Activated B cell treated with CpG ODN at 0.5 μM for 24 hours (primary cell): ENCODE measurements at regions of chr6 and their contacts with region 1.

Region 1: DNA sequence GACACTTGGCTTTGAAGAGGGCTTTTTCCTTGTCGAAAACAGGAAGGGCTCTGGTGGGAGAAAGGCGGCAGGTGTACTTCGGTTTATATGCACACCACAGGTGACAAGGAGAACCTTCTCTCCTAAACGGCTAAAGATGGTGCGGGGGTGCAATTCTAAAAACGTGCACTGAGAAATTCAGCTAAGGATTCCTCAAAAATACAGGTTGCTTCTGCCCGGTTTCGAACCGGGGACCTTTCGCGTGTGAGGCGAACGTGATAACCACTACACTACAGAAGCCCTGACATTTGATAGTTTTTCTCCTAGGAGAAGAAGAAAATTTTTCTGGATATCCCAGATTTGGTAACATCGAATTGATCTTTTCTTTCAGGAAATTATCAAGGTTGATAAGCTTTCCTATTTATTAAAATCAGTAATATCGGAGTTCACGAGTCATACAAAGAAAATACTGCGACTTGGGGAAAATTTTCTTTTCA is 32.0 kb downstream of the POM121L2 start:
- DNase-seq: no peak
- ATAC-seq: no peak
- H3K4me3 Mint-ChIP-seq: no peak overlapping the region
- H3K27ac Mint-ChIP-seq: no peak overlapping the region
- H3K4me1 Mint-ChIP-seq: peaks cover 5% of the 10 kb centered on the region
- H3K27me3 Mint-ChIP-seq: peaks cover 56% of the 10 kb centered on the region
- CTCF ChIP-seq: no peak

Region 2: GRCh38 chr6:27178407-27178730 is 101.7 kb before region 1 on chr6:
- CTCF ChIA-PET with region 1: no interaction called
- POLR2A ChIA-PET with region 1: no interaction called
- intact Hi-C with region 1: no loop called
- DNase-seq: no peak
- ATAC-seq: no peak
- H3K4me3 Mint-ChIP-seq: peak overlapping the region; percentile 98
- H3K27ac Mint-ChIP-seq: peak overlapping the region; percentile 92
- H3K4me1 Mint-ChIP-seq: peaks cover 12% of the 10 kb centered on the region
- H3K27me3 Mint-ChIP-seq: peaks cover 2% of the 10 kb centered on the region
- CTCF ChIP-seq: no peak

Region 3: GRCh38 chr6:27237089-27237803 is 42.9 kb before region 1 on chr6:
- CTCF ChIA-PET with region 1: no interaction called
- POLR2A ChIA-PET with region 1: no interaction called
- intact Hi-C with region 1: loop called (anchors 5 kb)
- DNase-seq: no peak
- ATAC-seq: no peak
- H3K4me3 Mint-ChIP-seq: peak overlapping the region; percentile 7
- H3K27ac Mint-ChIP-seq: peak overlapping the region; percentile 3
- H3K4me1 Mint-ChIP-seq: peaks cover 13% of the 10 kb centered on the region
- H3K27me3 Mint-ChIP-seq: peaks cover 62% of the 10 kb centered on the region
- CTCF ChIP-seq: no peak

Region 4: GRCh38 chr6:27608916-27609883 is 329.1 kb after region 1 on chr6:
- CTCF ChIA-PET with region 1: no interaction called
- POLR2A ChIA-PET with region 1: no interaction called
- intact Hi-C with region 1: loop called (anchors 10 kb)
- DNase-seq: no peak
- ATAC-seq: no peak
- H3K4me3 Mint-ChIP-seq: no peak overlapping the region
- H3K27ac Mint-ChIP-seq: no peak overlapping the region
- H3K4me1 Mint-ChIP-seq: peaks cover 7% of the 10 kb centered on the region
- H3K27me3 Mint-ChIP-seq: peaks cover 47% of the 10 kb centered on the region
- CTCF ChIP-seq: no peak